ENCODE measurements at regions of chr2 and their contacts with region 1.

Region 1: DNA sequence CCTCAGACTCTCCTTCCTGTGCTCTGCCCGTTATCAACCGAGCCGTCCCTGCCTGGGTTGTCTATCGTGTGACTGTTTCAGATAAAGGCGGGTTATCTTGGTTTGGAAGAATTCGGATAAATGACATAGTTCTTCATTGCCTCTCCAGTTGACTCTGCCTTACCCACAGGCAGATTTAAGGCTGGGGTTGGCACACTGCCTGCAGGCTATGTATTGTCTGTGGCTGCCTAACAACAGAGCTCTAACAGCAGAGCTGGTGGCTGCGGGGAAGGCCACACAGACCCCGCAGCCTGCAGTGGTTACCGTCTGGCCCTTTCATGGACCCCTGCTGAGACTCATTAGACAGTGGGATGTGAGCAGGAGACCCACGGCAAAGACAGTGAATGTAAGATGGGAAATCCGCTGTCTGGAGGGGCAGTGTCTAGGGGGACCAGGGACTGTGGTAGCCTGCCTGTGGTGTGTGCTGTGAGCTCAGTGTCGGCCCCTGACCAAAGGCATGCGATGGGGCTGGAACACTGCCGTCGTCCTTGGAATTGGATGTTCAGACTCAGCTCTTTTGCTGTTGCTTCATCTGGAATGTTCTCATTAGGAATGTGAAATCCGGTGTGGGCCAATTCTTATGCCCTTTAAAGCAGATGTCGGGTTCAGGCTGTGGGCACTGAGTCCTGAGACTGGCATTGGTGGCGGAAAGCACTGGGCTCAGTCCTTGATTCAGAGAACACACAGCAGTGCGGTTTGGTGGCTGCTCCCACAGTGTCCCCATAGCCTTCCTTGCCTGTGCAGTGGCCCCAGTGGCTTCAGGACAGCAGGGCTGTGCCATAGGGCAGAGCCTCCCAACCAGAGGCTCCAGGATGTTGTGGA is 44.5 kb downstream of the SH3RF3 start:
- DNase-seq: peak; percentile 70 to 72
- ATAC-seq: peak; percentile 60 to 91 (median 84)
- H3K4me3 ChIP-seq: no peak overlapping the region
- H3K27ac ChIP-seq: peak overlapping the region; percentile 71 to 87 (median 80)
- H3K4me1 ChIP-seq: peaks cover 12 to 70% (median 53%) of the 10 kb centered on the region in 9 donors
- H3K27me3 ChIP-seq: no peaks in the 10 kb centered on the region
- CTCF ChIP-seq: no peak

Region 2: DNA sequence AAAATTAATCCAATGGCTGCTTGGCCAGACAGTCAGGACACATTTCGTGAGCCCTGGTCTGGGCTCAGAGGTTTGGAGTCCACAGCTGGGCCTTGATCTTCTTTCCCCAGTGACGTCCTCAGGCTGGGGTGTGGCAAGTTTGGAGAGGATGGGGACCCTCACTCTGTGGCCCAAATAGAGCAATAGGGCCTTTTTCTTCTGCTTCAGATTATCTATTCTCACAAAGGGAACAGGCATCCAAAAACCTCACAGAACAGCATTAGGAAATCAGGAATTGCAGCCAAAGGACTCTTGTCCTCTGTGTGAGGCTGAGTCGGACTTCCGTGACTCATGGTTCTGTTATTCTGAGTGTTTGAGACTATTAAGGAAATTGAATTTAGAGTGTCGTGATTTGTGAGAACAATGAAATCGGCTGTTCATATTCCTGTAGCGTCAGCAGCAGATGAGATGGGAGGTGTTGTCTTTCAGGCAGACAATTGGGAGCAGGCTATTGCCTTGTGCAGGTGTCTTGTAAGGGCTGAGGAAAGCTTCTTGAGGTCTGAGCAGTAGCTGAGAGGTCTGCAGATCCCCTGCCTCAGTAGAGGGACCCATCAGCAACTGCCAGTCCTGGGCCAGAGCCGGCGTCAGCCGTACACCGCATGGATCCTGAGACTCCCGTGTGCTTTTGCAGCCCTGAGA is 69.3 kb after region 1 on chr2:
- intact Hi-C with region 1: loop called in 2 of 10 experiments (anchors 5 to 10 kb)
- DNase-seq: no peak
- ATAC-seq: peak; percentile 56 to 82 (median 70)
- H3K4me3 ChIP-seq: no peak overlapping the region
- H3K27ac ChIP-seq: peak overlapping the region; percentile 47 to 89 (median 82)
- H3K4me1 ChIP-seq: peaks cover 27 to 88% (median 66%) of the 10 kb centered on the region in 9 donors
- H3K27me3 ChIP-seq: no peaks in the 10 kb centered on the region
- CTCF ChIP-seq: no peak